Mammary epithelial cell (primary cell): ENCODE measurements at regions of chr15 and their contacts with region 1.

Region 1: GRCh38 chr15:57445872-57446271 is 69.6 kb downstream of the CGNL1 start:
- DNase-seq: no peak
- H3K4me3 ChIP-seq: no peak overlapping the region
- H3K27ac ChIP-seq: no peak overlapping the region
- H3K4me1 ChIP-seq: no peaks in the 10 kb centered on the region
- H3K27me3 ChIP-seq: no peaks in the 10 kb centered on the region
- CTCF ChIP-seq: no peak

Region 2: GRCh38 chr15:57382215-57382614 is 63.7 kb before region 1 on chr15:
- CTCF ChIA-PET with region 1: interaction called, 11 read pairs
- dilution Hi-C with region 1: no loop called
- in situ Hi-C with region 1: no loop called
- intact Hi-C with region 1: no loop called
- DNase-seq: no peak
- H3K4me3 ChIP-seq: no peak overlapping the region
- H3K27ac ChIP-seq: no peak overlapping the region
- H3K4me1 ChIP-seq: no peaks in the 10 kb centered on the region
- H3K27me3 ChIP-seq: peaks cover 2% of the 10 kb centered on the region
- CTCF ChIP-seq: no peak